ENCODE measurements at regions of chr12 and their contacts with region 1.

Region 1: GRCh38 chr12:49288412-49288853 is 6.5 kb upstream of the PRPH start:
- DNase-seq: peak in 8 of 9 donors; percentile 37 to 71 (median 66)
- ATAC-seq: peak; percentile 85
- H3K4me3 ChIP-seq: no peak overlapping the region
- H3K4me3 Mint-ChIP-seq: no peak overlapping the region
- H3K27ac ChIP-seq: no peak overlapping the region
- H3K27ac Mint-ChIP-seq: no peak overlapping the region
- H3K4me1 ChIP-seq: no peaks in the 10 kb centered on the region
- H3K4me1 Mint-ChIP-seq: peaks cover 0 to 1% (median 0%) of the 10 kb centered on the region in 7 donors
- H3K27me3 ChIP-seq: no peaks in the 10 kb centered on the region
- H3K27me3 Mint-ChIP-seq: peaks cover 31 to 53% (median 38%) of the 10 kb centered on the region in 5 donors

Region 2: GRCh38 chr12:49060237-49061156 is 227.9 kb before region 1 on chr12 and contains the start of gene KMT2D:
- CTCF ChIA-PET with region 1: no interaction called
- POLR2A ChIA-PET with region 1: no interaction called
- intact Hi-C with region 1: no loop called
- DNase-seq: peak; percentile 80 to 94 (median 91)
- ATAC-seq: peak; percentile 86
- H3K4me3 ChIP-seq: peak within 1 kb of the TSS; percentile 87
- H3K4me3 Mint-ChIP-seq: peak within 1 kb of the TSS; percentile 91 to 98 (median 95)
- H3K27ac ChIP-seq: peak within 1 kb of the TSS; percentile 87
- H3K27ac Mint-ChIP-seq: peak within 1 kb of the TSS; percentile 90 to 99 (median 97)
- H3K4me1 ChIP-seq: peaks cover 38 to 40% of the 10 kb centered on the region in 2 donors
- H3K4me1 Mint-ChIP-seq: peaks cover 44 to 55% (median 51%) of the 10 kb centered on the region in 7 donors
- H3K27me3 ChIP-seq: no peaks in the 10 kb centered on the region
- H3K27me3 Mint-ChIP-seq: no peaks in the 10 kb centered on the region
- total RNA-seq, gene KMT2D: 129 to 167 (median 151) TPM

Region 3: GRCh38 chr12:49336645-49337584 is 48.5 kb after region 1 on chr12 and contains the start of gene C1QL4:
- CTCF ChIA-PET with region 1: interaction called, 27 read pairs
- POLR2A ChIA-PET with region 1: interaction called, 4 read pairs
- intact Hi-C with region 1: loop called (anchors 1 kb)
- DNase-seq: peak; percentile 73 to 96 (median 85)
- ATAC-seq: peak; percentile 98
- H3K4me3 ChIP-seq: peak within 1 kb of the TSS; percentile 46
- H3K4me3 Mint-ChIP-seq: peak within 1 kb of the TSS; percentile 31 to 77 (median 72)
- H3K27ac ChIP-seq: no peak within 1 kb of the TSS
- H3K27ac Mint-ChIP-seq: peak within 1 kb of the TSS in 1 of 9 donors; percentile 32
- H3K4me1 ChIP-seq: peaks cover 8 to 9% of the 10 kb centered on the region in 2 donors
- H3K4me1 Mint-ChIP-seq: peaks cover 16 to 39% (median 31%) of the 10 kb centered on the region in 7 donors
- H3K27me3 ChIP-seq: peaks cover 0 to 21% of the 10 kb centered on the region in 2 donors
- H3K27me3 Mint-ChIP-seq: peaks cover 64 to 93% (median 75%) of the 10 kb centered on the region in 5 donors
- total RNA-seq, gene C1QL4: not detected

Region 4: GRCh38 chr12:49342066-49342913 is 53.9 kb after region 1 on chr12:
- CTCF ChIA-PET with region 1: interaction called, 27 read pairs
- POLR2A ChIA-PET with region 1: no interaction called
- intact Hi-C with region 1: loop called (anchors 1 kb)
- DNase-seq: peak; percentile 30 to 83 (median 61)
- ATAC-seq: peak; percentile 82
- H3K4me3 ChIP-seq: peak overlapping the region; percentile 43
- H3K4me3 Mint-ChIP-seq: peak overlapping the region; percentile 61 to 92 (median 76)
- H3K27ac ChIP-seq: no peak overlapping the region
- H3K27ac Mint-ChIP-seq: no peak overlapping the region
- H3K4me1 ChIP-seq: peaks cover 37 to 46% of the 10 kb centered on the region in 2 donors
- H3K4me1 Mint-ChIP-seq: peaks cover 19 to 59% (median 46%) of the 10 kb centered on the region in 7 donors
- H3K27me3 ChIP-seq: peaks cover 9 to 27% of the 10 kb centered on the region in 2 donors
- H3K27me3 Mint-ChIP-seq: peaks cover 58 to 93% (median 67%) of the 10 kb centered on the region in 5 donors

Measured in naive thymus-derived CD4-positive, alpha-beta T cell (primary cell).